ENCODE measurements at regions of chr10 and their contacts with region 1.

Region 1: GRCh38 chr10:63300801-63301200 is 165.0 kb downstream of the JMJD1C start:
- DNase-seq: no peak

Region 2: GRCh38 chr10:63281967-63282366 is 18.8 kb before region 1 on chr10:
- intact Hi-C with region 1: loop called in 1 of 2 experiments (anchors 2 kb)
- DNase-seq: no peak

Region 3: DNA sequence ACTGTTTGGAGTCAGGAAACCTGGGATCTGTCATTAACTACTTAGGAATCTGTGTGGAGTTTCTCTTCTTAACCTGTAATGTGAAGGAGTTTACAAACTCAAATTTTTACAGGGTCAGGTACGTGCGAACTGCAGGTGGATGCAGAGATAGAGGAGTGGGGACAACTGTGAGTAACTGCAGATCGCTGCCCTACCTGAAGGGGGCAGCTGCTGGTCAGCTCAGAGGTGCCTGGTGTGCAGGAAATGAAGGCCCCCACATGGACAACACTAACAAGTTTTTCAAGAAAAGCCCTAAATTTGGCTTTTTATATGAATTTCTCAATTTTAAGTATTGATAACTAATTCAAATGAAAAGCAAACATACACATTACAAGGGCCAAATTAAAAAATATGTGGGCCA is 600.4 kb after region 1 on chr10:
- intact Hi-C with region 1: loop called in 1 of 2 experiments (anchors 5 kb)
- DNase-seq: no peak